ENCODE measurements at regions of chr16 and their contacts with region 1.

Region 1: DNA sequence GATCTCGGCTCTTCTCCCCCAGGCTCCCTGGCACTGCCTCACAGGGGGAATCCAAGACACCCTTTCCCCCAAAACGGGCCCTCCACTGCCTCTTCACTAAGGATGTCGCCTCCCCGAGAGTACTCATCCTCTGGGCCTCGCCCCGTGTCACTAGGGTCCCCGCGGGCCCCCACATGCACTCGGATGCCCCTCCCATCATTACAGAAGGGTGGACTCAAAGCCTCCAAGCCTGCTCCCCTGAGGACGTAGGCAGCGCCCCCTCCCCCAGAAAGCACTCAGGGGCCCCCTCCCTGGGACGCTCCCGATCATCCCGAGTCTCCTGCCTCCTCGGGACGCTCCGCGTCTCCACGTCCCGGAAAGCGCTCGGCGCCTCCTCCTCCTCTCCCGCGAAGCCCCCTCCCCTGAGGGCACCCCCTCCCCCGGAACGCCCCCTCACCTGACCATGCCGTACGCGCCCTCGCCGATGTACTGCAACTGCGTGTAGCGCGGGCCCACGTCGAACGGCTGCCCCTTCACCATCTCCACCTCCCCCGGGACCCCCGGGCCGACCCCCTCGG is 338 bp downstream of the MAPK3 start:
- DNase-seq: no peak
- ATAC-seq: peak; percentile 18
- H3K4me3 ChIP-seq: peak overlapping the region; percentile 81 to 93 (median 93)
- H3K27ac ChIP-seq: peak overlapping the region; percentile 60
- H3K4me1 ChIP-seq: peaks cover 57% of the 10 kb centered on the region
- H3K27me3 ChIP-seq: no peaks in the 10 kb centered on the region
- CTCF ChIP-seq: no peak
- EP300 ChIP-seq: no peak
- POLR2A ChIP-seq: no peak
- RAD21 ChIP-seq: no peak

Region 2: DNA sequence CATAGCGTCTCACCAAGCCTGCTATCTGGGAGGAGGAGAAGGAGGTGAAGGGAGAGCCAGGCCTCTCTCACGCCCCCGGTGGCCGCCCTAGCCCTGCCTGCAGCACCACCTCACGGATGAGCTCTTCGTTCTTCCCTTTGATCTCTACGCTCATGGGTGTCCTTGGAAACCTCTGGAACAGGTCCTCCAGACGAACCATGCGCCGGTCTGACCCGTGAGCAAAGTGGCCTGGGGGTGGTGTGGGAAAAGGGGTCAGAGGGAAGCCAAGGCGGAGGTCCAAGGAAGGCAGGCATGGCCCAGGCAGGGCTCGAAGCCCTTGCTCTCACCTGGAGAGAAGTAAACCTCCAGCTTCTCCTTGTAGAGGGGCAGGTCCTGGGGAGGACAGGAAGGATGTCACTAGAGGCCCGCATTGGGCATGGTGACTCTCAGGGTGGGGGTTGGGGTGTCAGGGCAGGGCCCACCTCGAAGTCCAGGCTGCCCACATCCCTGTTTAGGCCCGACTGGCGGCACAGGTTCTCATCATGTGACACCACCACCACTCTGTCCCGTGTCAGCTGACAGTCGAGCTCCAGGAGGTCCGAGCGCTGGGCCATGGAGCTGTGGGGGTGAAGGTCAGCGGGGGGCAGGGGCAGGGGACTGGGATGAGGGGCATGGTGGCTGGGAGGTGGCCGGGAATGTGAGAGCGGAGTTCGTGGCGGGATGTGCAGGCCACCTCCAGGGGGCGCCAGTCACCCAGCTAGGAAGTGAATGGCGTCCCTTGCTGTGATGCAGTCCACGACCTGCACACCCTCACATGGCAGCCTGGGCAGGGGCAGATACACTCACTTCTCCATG is 10.3 kb before region 1 on chr16:
- CTCF ChIA-PET with region 1: no interaction called
- POLR2A ChIA-PET with region 1: interaction called, 28 read pairs
- in situ Hi-C with region 1: no loop called
- intact Hi-C with region 1: no loop called
- DNase-seq: peak; percentile 83
- ATAC-seq: peak; percentile 87
- H3K4me3 ChIP-seq: peak overlapping the region; percentile 23 to 65 (median 27)
- H3K27ac ChIP-seq: peak overlapping the region; percentile 70
- H3K4me1 ChIP-seq: peaks cover 30% of the 10 kb centered on the region
- H3K27me3 ChIP-seq: no peaks in the 10 kb centered on the region
- CTCF ChIP-seq: peak; percentile 99
- EP300 ChIP-seq: peak in 1 of 2 experiments; percentile 21; a peak in 1 of 4 replicates
- POLR2A ChIP-seq: peak; percentile 21 to 47; a peak in 1 of 4 replicates
- RAD21 ChIP-seq: peak; percentile 99

Region 3: DNA sequence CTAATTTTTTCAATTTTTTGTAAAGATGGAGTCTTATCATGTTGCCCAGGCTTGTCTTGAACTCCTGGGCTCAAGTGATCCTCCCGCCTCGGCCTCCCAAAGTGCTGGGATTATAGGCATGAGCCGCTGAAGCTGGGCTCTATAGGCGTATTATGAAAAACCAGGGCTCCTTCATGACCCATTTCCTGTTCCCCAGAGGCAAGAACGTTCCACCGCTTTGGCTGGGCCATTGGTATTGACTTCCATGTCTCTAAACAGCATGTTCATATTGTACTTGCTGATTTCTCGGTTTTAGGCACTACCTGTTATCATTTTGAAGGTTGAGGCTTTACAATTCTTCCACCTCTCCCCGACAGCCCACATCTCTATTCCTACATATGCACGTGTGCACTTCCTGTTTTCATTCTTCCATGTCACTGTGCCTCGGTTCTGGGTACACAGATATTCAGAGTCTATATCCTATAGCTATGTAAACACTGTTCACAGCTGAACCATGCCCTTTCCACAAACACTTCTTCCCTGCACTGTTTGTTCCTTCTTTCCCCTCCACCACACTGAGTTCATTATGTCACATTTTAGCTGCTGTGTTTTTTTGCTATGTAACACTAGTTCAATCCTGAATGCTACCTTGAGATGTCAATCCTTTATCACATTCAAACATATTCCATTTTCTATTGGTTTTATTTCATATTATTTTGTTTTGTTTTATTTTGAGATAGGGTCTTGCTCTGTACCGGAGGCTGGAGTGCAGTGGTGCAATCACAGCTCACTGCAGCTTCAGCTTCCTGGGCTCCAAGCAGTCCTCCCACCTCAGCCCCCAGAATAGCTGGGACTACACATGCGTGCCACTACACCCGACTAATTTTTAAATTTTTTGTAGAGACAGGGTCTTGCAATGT is 17.1 kb after region 1 on chr16:
- CTCF ChIA-PET with region 1: no interaction called
- POLR2A ChIA-PET with region 1: interaction called, 25 read pairs
- in situ Hi-C with region 1: no loop called
- intact Hi-C with region 1: no loop called
- DNase-seq: peak; percentile 98
- ATAC-seq: peak; percentile 96
- H3K4me3 ChIP-seq: peak overlapping the region; percentile 1 to 25 (median 8); a peak in 2 of 6 replicates
- H3K27ac ChIP-seq: peak overlapping the region; percentile 85
- H3K4me1 ChIP-seq: peaks cover 90% of the 10 kb centered on the region
- H3K27me3 ChIP-seq: no peaks in the 10 kb centered on the region
- CTCF ChIP-seq: peak; percentile 33
- EP300 ChIP-seq: peak; percentile 64 to 92; a peak in 3 of 4 replicates
- POLR2A ChIP-seq: peak; percentile 50; a peak in 3 of 4 replicates
- RAD21 ChIP-seq: 0 out of 2 replicates have a peak, but pooled peaks have one; percentile 25

Region 4: DNA sequence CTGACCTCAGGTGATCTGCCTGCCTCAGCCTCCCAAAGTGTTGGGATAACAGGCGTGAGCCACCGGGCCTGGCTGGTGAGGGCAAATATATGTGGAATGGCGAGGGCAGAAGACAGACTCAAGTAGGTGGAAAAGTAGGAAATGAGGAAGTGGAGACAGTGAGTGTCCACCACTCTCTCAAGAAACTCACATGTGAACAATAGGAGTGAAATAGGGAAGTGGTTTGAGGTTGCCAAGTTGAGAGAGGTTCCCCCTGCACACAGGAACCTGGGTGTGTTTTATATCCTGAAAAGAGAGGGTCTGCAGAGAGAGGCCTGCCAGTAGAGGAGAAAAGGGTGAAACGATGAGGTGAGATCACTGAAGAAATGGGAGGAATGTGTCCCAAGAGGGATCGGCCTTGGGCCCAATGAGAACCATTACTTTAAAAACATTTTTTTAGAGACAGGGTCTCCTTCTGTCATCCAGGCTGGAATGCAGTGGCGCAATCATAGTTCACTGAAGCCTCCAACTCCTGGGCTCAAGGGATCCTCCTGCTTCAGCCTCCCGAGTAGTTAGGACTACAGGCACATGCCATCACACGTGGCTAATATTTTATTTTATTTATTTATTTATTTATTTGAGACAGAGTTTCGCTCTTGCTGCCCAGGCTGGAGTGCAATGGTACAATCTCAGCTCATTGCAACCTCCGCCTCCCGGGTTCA is 43.7 kb after region 1 on chr16:
- CTCF ChIA-PET with region 1: no interaction called
- POLR2A ChIA-PET with region 1: no interaction called
- in situ Hi-C with region 1: no loop called
- intact Hi-C with region 1: no loop called
- DNase-seq: no peak
- ATAC-seq: no peak
- H3K4me3 ChIP-seq: no peak overlapping the region
- H3K27ac ChIP-seq: no peak overlapping the region
- H3K4me1 ChIP-seq: peaks cover 7% of the 10 kb centered on the region
- H3K27me3 ChIP-seq: no peaks in the 10 kb centered on the region
- CTCF ChIP-seq: no peak
- EP300 ChIP-seq: no peak
- POLR2A ChIP-seq: no peak
- RAD21 ChIP-seq: no peak